GM18951 (cell line): ENCODE measurements at regions of chr11 and their contacts with region 1.

Region 1: DNA sequence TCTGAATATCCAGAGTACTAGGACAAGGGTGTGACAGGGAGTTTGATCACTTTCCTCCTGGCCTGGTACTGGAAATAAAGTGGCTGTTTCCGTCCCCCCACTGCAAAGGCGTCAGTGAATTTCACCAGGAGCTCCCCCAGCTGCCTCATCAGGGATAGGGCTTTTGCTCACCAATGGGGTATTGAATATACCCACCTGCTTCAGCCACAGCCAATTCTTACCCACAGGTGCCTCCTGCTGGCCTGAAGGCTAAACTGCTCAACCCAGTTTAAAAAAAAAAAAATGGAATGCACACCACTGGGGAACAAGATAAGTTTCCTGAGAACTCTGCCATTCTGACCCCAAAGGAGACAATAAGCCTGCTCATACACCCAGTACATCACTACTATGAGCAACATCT is 65.3 kb upstream of the MS4A8 start:
- POLR2A ChIP-seq: no peak

Region 2: GRCh38 chr11:60349990-60350389 is 284.1 kb before region 1 on chr11:
- in situ Hi-C with region 1: loop called (anchors 10 kb)
- POLR2A ChIP-seq: no peak